ENCODE measurements at regions of chr3 and their contacts with region 1.

Region 1: GRCh38 chr3:128051837-128052594 is at the start of gene SEC61A1:
- DNase-seq: peak; percentile 94 to 97 (median 95)
- ATAC-seq: peak; percentile 97
- H3K4me3 ChIP-seq: peak within 1 kb of the TSS; percentile 82
- H3K4me3 Mint-ChIP-seq: peak within 1 kb of the TSS; percentile 90 to 98 (median 96)
- H3K27ac ChIP-seq: peak within 1 kb of the TSS; percentile 95
- H3K27ac Mint-ChIP-seq: peak within 1 kb of the TSS; percentile 87 to 99 (median 97)
- H3K4me1 ChIP-seq: peaks cover 28 to 37% of the 10 kb centered on the region in 2 donors
- H3K4me1 Mint-ChIP-seq: peaks cover 36 to 44% (median 43%) of the 10 kb centered on the region in 7 donors
- H3K27me3 ChIP-seq: no peaks in the 10 kb centered on the region
- H3K27me3 Mint-ChIP-seq: peaks cover 0 to 17% (median 1%) of the 10 kb centered on the region in 5 donors
- total RNA-seq, gene SEC61A1: 110 to 219 (median 132) TPM

Region 2: DNA sequence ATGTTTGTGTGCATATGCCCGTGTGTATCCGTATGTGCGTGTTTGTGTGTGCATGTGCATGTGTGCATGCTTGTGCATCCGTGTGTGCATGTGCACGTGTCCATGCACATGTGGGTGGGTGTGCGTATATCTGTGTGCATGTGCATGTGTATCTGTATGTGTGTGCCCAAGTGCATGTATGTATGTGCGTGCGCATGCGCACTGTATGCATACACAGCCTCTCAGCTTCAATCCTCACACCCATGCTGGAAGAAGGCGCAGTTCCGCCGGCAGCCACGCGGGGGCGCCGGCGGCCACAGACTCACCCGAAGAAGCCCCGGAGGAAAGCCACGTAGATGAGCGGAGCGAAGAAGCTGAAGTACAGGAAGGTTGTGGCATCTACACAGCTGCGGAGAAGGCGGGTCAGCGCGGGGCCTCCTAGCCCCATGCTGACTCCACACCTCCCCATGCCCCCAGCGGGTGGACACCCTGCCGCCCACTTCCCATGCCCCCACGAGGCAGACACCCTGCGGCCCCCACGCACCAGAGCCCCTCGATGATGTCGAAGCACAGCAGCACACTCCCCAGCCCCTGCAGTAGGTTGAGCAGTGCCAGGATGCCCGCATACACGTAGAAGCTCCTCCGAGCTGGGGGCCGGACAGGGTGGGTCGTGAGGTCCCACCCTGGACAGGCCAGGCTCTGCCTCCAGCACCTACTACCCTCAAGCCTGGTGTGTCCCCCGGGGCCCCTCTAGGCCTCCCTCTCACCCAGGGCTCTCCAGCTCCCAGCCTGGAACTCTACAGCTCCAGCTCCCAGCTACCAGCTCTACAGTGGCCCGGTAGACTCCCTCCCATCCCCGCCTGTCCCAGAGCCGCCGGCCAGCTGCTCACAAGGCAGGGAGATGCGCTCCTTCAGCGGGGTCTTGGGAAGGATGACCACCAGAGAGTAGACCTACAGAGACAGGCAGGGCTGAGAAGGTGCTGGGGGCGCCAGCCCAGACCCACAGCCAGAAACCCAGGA is 476.8 kb before region 1 on chr3:
- CTCF ChIA-PET with region 1: interaction called, 3 read pairs
- POLR2A ChIA-PET with region 1: interaction called, 3 read pairs
- intact Hi-C with region 1: loop called in 1 of 2 experiments (anchors 1 kb)
- DNase-seq: peak; percentile 77 to 86 (median 83)
- ATAC-seq: peak; percentile 96
- H3K4me3 ChIP-seq: no peak overlapping the region
- H3K4me3 Mint-ChIP-seq: peak overlapping the region in 7 of 10 donors; percentile 18 to 57 (median 32)
- H3K27ac ChIP-seq: peak overlapping the region; percentile 39
- H3K27ac Mint-ChIP-seq: peak overlapping the region in 8 of 9 donors; percentile 4 to 81 (median 50)
- H3K4me1 ChIP-seq: peaks cover 0 to 7% of the 10 kb centered on the region in 2 donors
- H3K4me1 Mint-ChIP-seq: peaks cover 8 to 22% (median 13%) of the 10 kb centered on the region in 7 donors
- H3K27me3 ChIP-seq: no peaks in the 10 kb centered on the region
- H3K27me3 Mint-ChIP-seq: no peaks in the 10 kb centered on the region

Region 3: GRCh38 chr3:127672516-127673190 is 379.4 kb before region 1 on chr3 and contains the start of gene ABTB1:
- CTCF ChIA-PET with region 1: no interaction called
- POLR2A ChIA-PET with region 1: interaction called, 3 read pairs
- intact Hi-C with region 1: loop called (anchors 1 kb)
- DNase-seq: peak; percentile 73 to 88 (median 83)
- ATAC-seq: peak; percentile 93
- H3K4me3 ChIP-seq: peak within 1 kb of the TSS; percentile 86
- H3K4me3 Mint-ChIP-seq: peak within 1 kb of the TSS; percentile 88 to 96 (median 94)
- H3K27ac ChIP-seq: peak within 1 kb of the TSS; percentile 98
- H3K27ac Mint-ChIP-seq: peak within 1 kb of the TSS; percentile 92 to 98 (median 97)
- H3K4me1 ChIP-seq: peaks cover 13 to 17% of the 10 kb centered on the region in 2 donors
- H3K4me1 Mint-ChIP-seq: peaks cover 17 to 37% (median 33%) of the 10 kb centered on the region in 7 donors
- H3K27me3 ChIP-seq: no peaks in the 10 kb centered on the region
- H3K27me3 Mint-ChIP-seq: no peaks in the 10 kb centered on the region
- total RNA-seq, gene ABTB1: 26.7 to 182 (median 124) TPM

Region 4: GRCh38 chr3:128153156-128154041 is 101.4 kb after region 1 on chr3 and contains the start of gene EEFSEC:
- CTCF ChIA-PET with region 1: no interaction called
- POLR2A ChIA-PET with region 1: no interaction called
- intact Hi-C with region 1: loop called (anchors 1 kb)
- DNase-seq: peak; percentile 75 to 93 (median 82)
- ATAC-seq: peak; percentile 95
- H3K4me3 ChIP-seq: peak within 1 kb of the TSS; percentile 79
- H3K4me3 Mint-ChIP-seq: peak within 1 kb of the TSS; percentile 84 to 98 (median 94)
- H3K27ac ChIP-seq: peak within 1 kb of the TSS; percentile 77
- H3K27ac Mint-ChIP-seq: peak within 1 kb of the TSS; percentile 85 to 98 (median 95)
- H3K4me1 ChIP-seq: peaks cover 13% of the 10 kb centered on the region in 2 donors
- H3K4me1 Mint-ChIP-seq: peaks cover 16 to 59% (median 47%) of the 10 kb centered on the region in 7 donors
- H3K27me3 ChIP-seq: no peaks in the 10 kb centered on the region
- H3K27me3 Mint-ChIP-seq: no peaks in the 10 kb centered on the region
- total RNA-seq, gene EEFSEC: 17.3 to 18.5 (median 17.9) TPM

Region 5: GRCh38 chr3:128794770-128795649 is 743.0 kb after region 1 on chr3:
- CTCF ChIA-PET with region 1: no interaction called
- POLR2A ChIA-PET with region 1: no interaction called
- intact Hi-C with region 1: loop called in 1 of 2 experiments (anchors 10 kb)
- DNase-seq: peak; percentile 26 to 81 (median 76)
- ATAC-seq: peak; percentile 98
- H3K4me3 ChIP-seq: no peak overlapping the region
- H3K4me3 Mint-ChIP-seq: peak overlapping the region; percentile 26 to 78 (median 51)
- H3K27ac ChIP-seq: peak overlapping the region; percentile 54
- H3K27ac Mint-ChIP-seq: peak overlapping the region; percentile 71 to 96 (median 85)
- H3K4me1 ChIP-seq: peaks cover 11 to 54% of the 10 kb centered on the region in 2 donors
- H3K4me1 Mint-ChIP-seq: peaks cover 32 to 74% (median 66%) of the 10 kb centered on the region in 7 donors
- H3K27me3 ChIP-seq: no peaks in the 10 kb centered on the region
- H3K27me3 Mint-ChIP-seq: no peaks in the 10 kb centered on the region